ENCODE measurements at regions of chr1 and their contacts with region 1.

Region 1: GRCh38 chr1:17494114-17494729 is 45.3 kb upstream of the ARHGEF10L start:
- DNase-seq: peak; percentile 87
- H3K27ac ChIP-seq: no peak overlapping the region
- CTCF ChIP-seq: peak; percentile 90

Region 2: DNA sequence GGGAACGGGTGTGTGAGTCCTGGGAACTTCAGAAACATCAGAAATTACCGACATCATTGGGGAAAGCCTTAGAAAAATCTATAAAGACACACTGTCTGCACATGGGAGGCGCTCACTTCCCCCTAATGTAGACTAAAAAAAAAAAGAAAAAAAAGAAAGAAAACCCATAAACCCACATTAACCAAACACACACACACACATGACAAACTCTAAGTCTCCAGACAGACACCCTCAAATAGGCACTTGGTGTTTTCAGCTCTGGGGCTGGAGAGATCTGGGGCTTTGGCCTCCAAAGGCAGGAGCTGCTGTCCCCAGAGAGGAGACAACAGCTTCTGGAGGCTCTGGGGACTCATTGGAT is 427.2 kb before region 1 on chr1:
- CTCF ChIA-PET with region 1: no interaction called
- POLR2A ChIA-PET with region 1: interaction called, 15 read pairs
- DNase-seq: no peak
- H3K27ac ChIP-seq: no peak overlapping the region
- CTCF ChIP-seq: no peak

Measured in RWPE1 (cell line).